Naive thymus-derived CD4-positive, alpha-beta T cell (primary cell): ENCODE measurements at regions of chr1 and their contacts with region 1.

Region 1: GRCh38 chr1:89454845-89455521 is 69.6 kb upstream of the LRRC8B start:
- DNase-seq: peak in 8 of 9 donors; percentile 46 to 75 (median 66)
- ATAC-seq: peak; percentile 94
- H3K4me3 ChIP-seq: no peak overlapping the region
- H3K4me3 Mint-ChIP-seq: no peak overlapping the region
- H3K27ac ChIP-seq: no peak overlapping the region
- H3K27ac Mint-ChIP-seq: peak overlapping the region in 1 of 9 donors; percentile 38
- H3K4me1 ChIP-seq: no peaks in the 10 kb centered on the region
- H3K4me1 Mint-ChIP-seq: peaks cover 4 to 23% (median 9%) of the 10 kb centered on the region in 7 donors
- H3K27me3 ChIP-seq: no peaks in the 10 kb centered on the region
- H3K27me3 Mint-ChIP-seq: peaks cover under 1 to 45% (median 11%) of the 10 kb centered on the region in 5 donors

Region 2: GRCh38 chr1:88608139-88608943 is 846.6 kb before region 1 on chr1:
- CTCF ChIA-PET with region 1: no interaction called
- POLR2A ChIA-PET with region 1: no interaction called
- intact Hi-C with region 1: loop called in 1 of 2 experiments (anchors 10 kb)
- DNase-seq: peak in 6 of 9 donors; percentile 2 to 38 (median 14)
- ATAC-seq: peak; percentile 60
- H3K4me3 ChIP-seq: no peak overlapping the region
- H3K4me3 Mint-ChIP-seq: peak overlapping the region in 1 of 10 donors; percentile 1
- H3K27ac ChIP-seq: no peak overlapping the region
- H3K27ac Mint-ChIP-seq: no peak overlapping the region
- H3K4me1 ChIP-seq: no peaks in the 10 kb centered on the region
- H3K4me1 Mint-ChIP-seq: no peaks in the 10 kb centered on the region
- H3K27me3 ChIP-seq: no peaks in the 10 kb centered on the region
- H3K27me3 Mint-ChIP-seq: peaks cover 0 to 9% (median 5%) of the 10 kb centered on the region in 5 donors

Region 3: GRCh38 chr1:88800382-88801051 is 654.5 kb before region 1 on chr1:
- CTCF ChIA-PET with region 1: no interaction called
- POLR2A ChIA-PET with region 1: no interaction called
- intact Hi-C with region 1: no loop called
- DNase-seq: peak in 6 of 9 donors; percentile 6 to 28 (median 26)
- ATAC-seq: peak; percentile 80
- H3K4me3 ChIP-seq: no peak overlapping the region
- H3K4me3 Mint-ChIP-seq: peak overlapping the region in 1 of 10 donors; percentile 17
- H3K27ac ChIP-seq: no peak overlapping the region
- H3K27ac Mint-ChIP-seq: peak overlapping the region in 3 of 9 donors; percentile 31 to 64 (median 47)
- H3K4me1 ChIP-seq: no peaks in the 10 kb centered on the region
- H3K4me1 Mint-ChIP-seq: peaks cover 0 to 14% (median 5%) of the 10 kb centered on the region in 7 donors
- H3K27me3 ChIP-seq: no peaks in the 10 kb centered on the region
- H3K27me3 Mint-ChIP-seq: no peaks in the 10 kb centered on the region

Region 4: DNA sequence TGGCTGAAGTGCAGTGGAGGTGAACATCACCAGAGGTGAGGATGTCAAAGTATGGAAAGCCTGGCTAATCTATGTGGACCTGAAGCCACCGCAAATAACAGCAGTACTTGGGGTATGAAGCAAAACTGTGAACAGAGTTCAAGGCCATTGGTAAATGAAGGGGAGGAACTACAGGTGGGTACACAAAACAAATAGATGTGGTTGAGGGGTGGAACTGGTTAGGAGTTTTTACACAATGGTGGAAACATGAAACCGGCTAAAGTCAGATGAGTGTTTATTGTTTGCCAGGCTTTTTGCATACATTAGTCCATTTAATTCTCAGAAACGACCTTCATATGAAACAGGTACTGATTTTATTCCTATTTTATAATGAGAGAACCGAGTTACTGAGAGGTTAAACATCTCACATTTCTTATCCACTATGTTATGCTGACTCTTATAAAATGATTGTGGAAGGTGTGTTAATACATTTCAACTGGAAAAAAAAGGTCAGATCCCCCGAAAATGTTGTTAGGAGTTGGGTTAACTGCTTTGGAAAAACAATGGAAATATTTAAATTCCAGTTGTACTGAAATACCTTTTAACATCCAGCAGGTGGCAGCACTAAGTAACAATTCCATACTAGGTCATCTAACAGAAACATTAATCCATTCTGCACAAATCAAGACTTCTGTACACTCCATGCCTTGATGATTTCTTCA is 519.3 kb before region 1 on chr1:
- CTCF ChIA-PET with region 1: no interaction called
- POLR2A ChIA-PET with region 1: no interaction called
- intact Hi-C with region 1: loop called in 1 of 2 experiments (anchors 1 kb)
- DNase-seq: peak in 6 of 9 donors; percentile 15 to 41 (median 32)
- ATAC-seq: peak; percentile 48
- H3K4me3 ChIP-seq: no peak overlapping the region
- H3K4me3 Mint-ChIP-seq: no peak overlapping the region
- H3K27ac ChIP-seq: no peak overlapping the region
- H3K27ac Mint-ChIP-seq: peak overlapping the region in 1 of 9 donors; percentile 45
- H3K4me1 ChIP-seq: no peaks in the 10 kb centered on the region
- H3K4me1 Mint-ChIP-seq: peaks cover 0 to 11% (median 9%) of the 10 kb centered on the region in 7 donors
- H3K27me3 ChIP-seq: no peaks in the 10 kb centered on the region
- H3K27me3 Mint-ChIP-seq: no peaks in the 10 kb centered on the region

Region 5: GRCh38 chr1:88983791-88984559 is 471.0 kb before region 1 on chr1:
- CTCF ChIA-PET with region 1: interaction called, 49 read pairs
- POLR2A ChIA-PET with region 1: no interaction called
- intact Hi-C with region 1: loop called in 1 of 2 experiments (anchors 1 kb)
- DNase-seq: peak in 7 of 9 donors; percentile 52 to 72 (median 62)
- ATAC-seq: peak; percentile 85
- H3K4me3 ChIP-seq: no peak overlapping the region
- H3K4me3 Mint-ChIP-seq: peak overlapping the region in 9 of 10 donors; percentile 56 to 76 (median 63)
- H3K27ac ChIP-seq: peak overlapping the region; percentile 55
- H3K27ac Mint-ChIP-seq: peak overlapping the region; percentile 46 to 94 (median 81)
- H3K4me1 ChIP-seq: peaks cover 5 to 13% of the 10 kb centered on the region in 2 donors
- H3K4me1 Mint-ChIP-seq: peaks cover 29 to 82% (median 70%) of the 10 kb centered on the region in 7 donors
- H3K27me3 ChIP-seq: no peaks in the 10 kb centered on the region
- H3K27me3 Mint-ChIP-seq: no peaks in the 10 kb centered on the region

Region 6: DNA sequence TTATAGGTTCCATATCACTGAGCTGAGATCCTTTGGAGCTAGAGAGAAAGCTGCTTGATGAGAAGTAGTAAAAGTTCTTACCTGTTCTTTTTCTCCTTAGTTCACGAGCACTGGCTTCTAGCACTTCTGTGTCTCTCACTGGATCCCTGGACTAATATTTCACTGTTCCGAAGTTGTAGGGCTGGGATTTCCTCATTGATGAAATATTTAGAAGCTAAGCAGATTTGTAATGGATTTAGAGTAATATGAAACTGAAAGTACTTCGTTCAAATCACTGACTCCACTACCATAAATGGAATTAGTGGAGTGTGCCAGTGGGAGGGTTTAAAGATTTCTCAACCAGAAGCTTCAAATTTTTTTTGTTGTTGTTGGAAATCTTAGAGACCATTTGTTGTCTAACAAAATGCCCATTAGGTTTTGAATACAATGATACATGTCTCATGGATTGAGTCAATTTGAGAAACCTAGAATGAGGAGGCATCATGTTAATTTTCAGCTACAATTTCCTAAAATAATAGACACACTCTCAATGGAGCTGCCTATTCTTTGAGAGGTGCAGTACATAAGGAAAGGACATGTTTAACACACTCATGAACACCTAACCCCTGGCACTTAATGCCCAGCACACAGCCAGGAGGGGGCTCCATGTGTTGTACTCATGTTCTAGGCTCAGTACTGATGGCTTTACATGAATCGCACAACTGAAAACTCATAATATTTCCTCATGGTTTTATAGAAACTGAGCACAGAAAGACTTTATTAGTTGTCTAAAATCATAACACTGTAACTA is 389.7 kb before region 1 on chr1 and contains the start of gene GBP1:
- CTCF ChIA-PET with region 1: no interaction called
- POLR2A ChIA-PET with region 1: no interaction called
- intact Hi-C with region 1: loop called in 1 of 2 experiments (anchors 5 kb)
- DNase-seq: peak in 7 of 9 donors; percentile 34 to 56 (median 52)
- ATAC-seq: peak; percentile 88
- H3K4me3 ChIP-seq: peak within 1 kb of the TSS; percentile 56
- H3K4me3 Mint-ChIP-seq: peak within 1 kb of the TSS; percentile 89 to 97 (median 94)
- H3K27ac ChIP-seq: peak within 1 kb of the TSS; percentile 89
- H3K27ac Mint-ChIP-seq: peak within 1 kb of the TSS; percentile 90 to 98 (median 95)
- H3K4me1 ChIP-seq: peaks cover 15 to 26% of the 10 kb centered on the region in 2 donors
- H3K4me1 Mint-ChIP-seq: peaks cover 44 to 74% (median 62%) of the 10 kb centered on the region in 7 donors
- H3K27me3 ChIP-seq: no peaks in the 10 kb centered on the region
- H3K27me3 Mint-ChIP-seq: no peaks in the 10 kb centered on the region
- total RNA-seq, gene GBP1: 17.1 to 319 (median 51.9) TPM

Region 7: GRCh38 chr1:89198491-89199072 is 256.4 kb before region 1 on chr1 and contains the start of gene GBP4:
- CTCF ChIA-PET with region 1: no interaction called
- POLR2A ChIA-PET with region 1: no interaction called
- intact Hi-C with region 1: loop called (anchors 5 to 10 kb)
- DNase-seq: peak; percentile 25 to 49 (median 41)
- ATAC-seq: peak; percentile 73
- H3K4me3 ChIP-seq: peak within 1 kb of the TSS; percentile 92
- H3K4me3 Mint-ChIP-seq: peak within 1 kb of the TSS; percentile 91 to 99 (median 97)
- H3K27ac ChIP-seq: peak within 1 kb of the TSS; percentile 88
- H3K27ac Mint-ChIP-seq: peak within 1 kb of the TSS; percentile 91 to 99 (median 95)
- H3K4me1 ChIP-seq: peaks cover 42 to 47% of the 10 kb centered on the region in 2 donors
- H3K4me1 Mint-ChIP-seq: peaks cover 51 to 82% (median 71%) of the 10 kb centered on the region in 7 donors
- H3K27me3 ChIP-seq: no peaks in the 10 kb centered on the region
- H3K27me3 Mint-ChIP-seq: no peaks in the 10 kb centered on the region
- total RNA-seq, gene GBP4: 29.1 to 174 (median 37.4) TPM

Region 8: DNA sequence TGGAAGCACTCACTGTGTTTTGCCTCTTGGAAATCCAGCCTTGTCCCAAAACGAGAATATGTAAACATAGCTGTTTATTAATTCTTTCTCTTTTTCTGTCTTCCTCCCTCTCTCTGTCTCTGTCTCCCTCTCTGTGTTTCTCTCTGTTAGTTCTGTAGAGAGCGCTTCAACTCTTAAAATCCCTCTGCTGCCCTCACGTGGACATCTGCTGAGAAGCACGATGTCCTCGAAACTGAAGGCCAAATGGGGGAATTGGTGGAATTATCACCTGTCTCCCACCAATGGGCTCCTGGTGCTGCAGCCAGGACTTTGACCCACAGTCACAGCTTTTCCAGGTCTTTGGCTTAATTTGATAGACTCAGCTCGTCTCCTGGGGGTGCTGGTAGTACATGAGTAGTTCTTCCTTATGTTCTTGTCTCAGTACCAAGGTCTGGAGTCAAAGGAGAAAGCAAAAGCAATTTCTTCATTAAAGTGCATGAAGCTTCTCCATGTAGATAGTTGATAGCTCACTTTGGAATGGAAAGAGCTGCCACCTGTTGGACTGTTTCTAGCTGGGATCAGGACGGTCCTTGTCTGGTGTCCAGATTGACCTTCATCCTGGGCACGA is 96.6 kb before region 1 on chr1:
- CTCF ChIA-PET with region 1: interaction called, 3 read pairs
- POLR2A ChIA-PET with region 1: no interaction called
- intact Hi-C with region 1: loop called (anchors 2 kb)
- DNase-seq: peak; percentile 60 to 81 (median 75)
- ATAC-seq: peak; percentile 96
- H3K4me3 ChIP-seq: no peak overlapping the region
- H3K4me3 Mint-ChIP-seq: peak overlapping the region in 8 of 10 donors; percentile 1 to 82 (median 12)
- H3K27ac ChIP-seq: no peak overlapping the region
- H3K27ac Mint-ChIP-seq: peak overlapping the region in 6 of 9 donors; percentile 3 to 88 (median 46)
- H3K4me1 ChIP-seq: peaks cover 0 to 16% of the 10 kb centered on the region in 2 donors
- H3K4me1 Mint-ChIP-seq: peaks cover 5 to 61% (median 26%) of the 10 kb centered on the region in 7 donors
- H3K27me3 ChIP-seq: no peaks in the 10 kb centered on the region
- H3K27me3 Mint-ChIP-seq: peaks cover 0 to 8% (median 0%) of the 10 kb centered on the region in 5 donors